Activated B cell treated with CpG ODN at 0.5 μM for 24 hours (primary cell): ENCODE measurements at regions of chr11 and their contacts with region 1.

Region 1: DNA sequence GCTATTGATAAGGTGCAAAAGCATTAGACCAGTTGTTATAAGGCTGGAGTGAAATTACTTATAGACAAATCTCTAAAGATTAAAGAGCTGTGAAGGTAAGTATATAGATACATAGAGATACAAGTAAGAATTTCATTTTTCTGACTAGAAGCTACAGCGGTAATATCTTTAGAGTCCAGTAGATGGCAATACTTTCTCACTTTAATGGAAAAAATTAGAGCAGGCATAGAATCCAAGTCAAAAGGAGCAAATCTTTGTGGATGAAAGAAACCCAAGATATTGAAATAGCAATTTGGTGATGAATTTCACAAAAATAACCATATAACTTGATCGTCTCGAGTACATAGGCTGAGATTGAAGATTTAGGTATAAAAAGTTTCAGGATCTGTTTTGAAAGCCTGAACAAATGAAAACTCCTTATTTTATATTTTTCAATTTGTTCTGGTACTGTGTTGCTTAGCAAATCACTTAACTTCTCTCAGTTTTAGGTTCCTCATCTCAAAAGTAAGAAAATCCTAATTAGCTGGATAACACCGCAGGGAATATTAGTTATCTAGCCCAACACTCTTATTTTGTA is 81.9 kb downstream of the UVRAG start:
- DNase-seq: no peak
- ATAC-seq: no peak
- H3K4me3 Mint-ChIP-seq: no peak overlapping the region
- H3K27ac Mint-ChIP-seq: no peak overlapping the region
- H3K4me1 Mint-ChIP-seq: peaks cover 60% of the 10 kb centered on the region
- H3K27me3 Mint-ChIP-seq: no peaks in the 10 kb centered on the region
- CTCF ChIP-seq: no peak

Region 2: GRCh38 chr11:75786101-75786736 is 110.7 kb before region 1 on chr11:
- CTCF ChIA-PET with region 1: no interaction called
- POLR2A ChIA-PET with region 1: no interaction called
- intact Hi-C with region 1: no loop called
- DNase-seq: no peak
- ATAC-seq: no peak
- H3K4me3 Mint-ChIP-seq: no peak overlapping the region
- H3K27ac Mint-ChIP-seq: no peak overlapping the region
- H3K4me1 Mint-ChIP-seq: no peaks in the 10 kb centered on the region
- H3K27me3 Mint-ChIP-seq: no peaks in the 10 kb centered on the region
- CTCF ChIP-seq: no peak

Region 3: GRCh38 chr11:75814686-75815344 is 82.1 kb before region 1 on chr11 and contains the start of gene UVRAG:
- CTCF ChIA-PET with region 1: interaction called, 3 read pairs
- POLR2A ChIA-PET with region 1: interaction called, 4 read pairs
- intact Hi-C with region 1: loop called (anchors 2 kb)
- DNase-seq: peak; percentile 96
- ATAC-seq: peak; percentile 85
- H3K4me3 Mint-ChIP-seq: no peak within 1 kb of the TSS
- H3K27ac Mint-ChIP-seq: peak within 1 kb of the TSS; percentile 96
- H3K4me1 Mint-ChIP-seq: peaks cover 53% of the 10 kb centered on the region
- H3K27me3 Mint-ChIP-seq: no peaks in the 10 kb centered on the region
- CTCF ChIP-seq: no peak
- total RNA-seq, gene UVRAG: 86.8 and 103 TPM in 2 replicates

Region 4: GRCh38 chr11:75873417-75874221 is 23.3 kb before region 1 on chr11:
- CTCF ChIA-PET with region 1: interaction called, 19 read pairs
- POLR2A ChIA-PET with region 1: interaction called, 16 read pairs
- intact Hi-C with region 1: loop called (anchors 1 kb)
- DNase-seq: no peak
- ATAC-seq: peak; percentile 79
- H3K4me3 Mint-ChIP-seq: peak overlapping the region; percentile 79
- H3K27ac Mint-ChIP-seq: peak overlapping the region; percentile 93
- H3K4me1 Mint-ChIP-seq: peaks cover 69% of the 10 kb centered on the region
- H3K27me3 Mint-ChIP-seq: no peaks in the 10 kb centered on the region
- CTCF ChIP-seq: no peak

Region 5: DNA sequence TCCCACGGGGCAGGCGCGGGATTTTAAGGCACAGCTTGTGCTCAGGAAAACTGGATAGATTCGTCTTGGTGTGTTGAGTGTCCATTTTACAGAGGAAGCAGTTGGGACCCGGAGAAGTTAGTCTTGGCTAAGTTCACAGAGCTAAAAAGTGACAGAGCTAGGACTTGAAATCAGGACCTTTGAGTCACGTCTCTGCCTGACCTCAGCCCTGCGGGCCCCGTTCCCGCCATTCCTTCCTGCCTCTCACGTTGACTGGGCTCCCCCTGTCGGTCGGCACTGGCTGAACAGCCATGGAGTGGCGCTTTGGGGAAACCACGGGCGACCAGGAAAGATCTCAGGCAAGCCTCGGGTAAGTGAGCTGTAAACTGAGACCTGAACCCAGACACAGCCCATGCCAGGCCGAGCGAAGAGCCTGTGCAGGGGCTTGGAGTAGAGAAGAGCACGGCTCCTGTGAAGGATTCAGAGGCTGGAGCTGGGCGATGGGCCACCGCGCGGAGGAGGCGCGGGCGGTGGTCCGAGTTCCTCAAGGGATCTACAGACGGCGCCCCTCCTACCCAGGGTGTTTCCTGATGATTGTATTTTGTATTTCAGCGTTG is 255.3 kb after region 1 on chr11:
- CTCF ChIA-PET with region 1: interaction called, 27 read pairs
- POLR2A ChIA-PET with region 1: interaction called, 9 read pairs
- intact Hi-C with region 1: loop called (anchors 1 kb)
- DNase-seq: peak; percentile 68
- ATAC-seq: peak; percentile 88
- H3K4me3 Mint-ChIP-seq: peak overlapping the region; percentile 80
- H3K27ac Mint-ChIP-seq: peak overlapping the region; percentile 41
- H3K4me1 Mint-ChIP-seq: peaks cover 22% of the 10 kb centered on the region
- H3K27me3 Mint-ChIP-seq: no peaks in the 10 kb centered on the region
- CTCF ChIP-seq: no peak

Region 6: GRCh38 chr11:76318744-76319384 is 421.9 kb after region 1 on chr11:
- CTCF ChIA-PET with region 1: interaction called, 5 read pairs
- POLR2A ChIA-PET with region 1: no interaction called
- intact Hi-C with region 1: loop called (anchors 1 kb)
- DNase-seq: peak; percentile 73
- ATAC-seq: peak; percentile 97
- H3K4me3 Mint-ChIP-seq: no peak overlapping the region
- H3K27ac Mint-ChIP-seq: no peak overlapping the region
- H3K4me1 Mint-ChIP-seq: peaks cover 2% of the 10 kb centered on the region
- H3K27me3 Mint-ChIP-seq: peaks cover 40% of the 10 kb centered on the region
- CTCF ChIP-seq: no peak

Region 7: GRCh38 chr11:76626921-76627401 is 730.0 kb after region 1 on chr11:
- CTCF ChIA-PET with region 1: no interaction called
- POLR2A ChIA-PET with region 1: interaction called, 7 read pairs
- intact Hi-C with region 1: loop called (anchors 10 kb)
- DNase-seq: peak; percentile 79
- ATAC-seq: peak; percentile 59
- H3K4me3 Mint-ChIP-seq: peak overlapping the region; percentile 74
- H3K27ac Mint-ChIP-seq: peak overlapping the region; percentile 89
- H3K4me1 Mint-ChIP-seq: peaks cover 64% of the 10 kb centered on the region
- H3K27me3 Mint-ChIP-seq: peaks cover 26% of the 10 kb centered on the region
- CTCF ChIP-seq: no peak